Left ventricle myocardium inferior (tissue), 1 donor: ENCODE measurements at regions of chr4 and their contacts with region 1.

Region 1: DNA sequence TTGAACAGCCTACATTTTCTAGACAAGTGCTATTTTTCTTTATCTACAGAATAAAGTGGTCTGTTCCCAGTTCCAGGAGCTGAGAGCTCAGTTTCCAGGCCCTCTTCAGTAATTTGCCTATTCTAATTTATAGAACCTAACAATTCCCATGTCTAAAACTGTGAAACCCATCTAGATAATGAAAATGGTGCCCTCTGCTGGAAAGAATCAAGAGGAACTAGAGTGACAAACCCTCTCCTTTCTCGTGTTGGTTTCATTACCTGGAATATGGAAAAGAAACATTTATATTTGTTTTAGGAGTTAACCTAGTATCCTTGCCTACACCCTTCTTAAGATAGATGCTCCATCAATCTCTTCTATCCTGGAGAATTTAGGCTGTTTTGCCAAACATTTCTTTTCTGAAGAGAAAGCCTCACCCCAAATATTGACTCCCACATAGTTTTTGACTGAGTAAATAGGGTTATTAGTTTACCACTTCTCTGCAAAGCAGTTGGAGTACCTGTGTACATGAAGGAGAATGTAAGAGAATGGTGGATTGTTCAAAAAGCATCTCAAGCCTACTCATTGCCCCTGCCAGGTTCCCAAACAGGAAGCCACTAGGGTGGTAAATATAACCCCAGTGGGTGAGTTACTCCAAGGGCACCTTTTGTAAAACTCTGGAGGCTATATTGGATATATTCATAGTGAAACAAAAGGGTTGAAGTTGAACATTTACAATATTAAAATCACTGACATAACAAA is 121.6 kb downstream of the RASL11B start:
- DNase-seq: no peak
- H3K4me3 ChIP-seq: no peak overlapping the region
- H3K27ac ChIP-seq: peak overlapping the region; percentile 34
- H3K4me1 ChIP-seq: peaks cover 14% of the 10 kb centered on the region
- H3K27me3 ChIP-seq: no peaks in the 10 kb centered on the region
- CTCF ChIP-seq: peak; percentile 79

Region 2: DNA sequence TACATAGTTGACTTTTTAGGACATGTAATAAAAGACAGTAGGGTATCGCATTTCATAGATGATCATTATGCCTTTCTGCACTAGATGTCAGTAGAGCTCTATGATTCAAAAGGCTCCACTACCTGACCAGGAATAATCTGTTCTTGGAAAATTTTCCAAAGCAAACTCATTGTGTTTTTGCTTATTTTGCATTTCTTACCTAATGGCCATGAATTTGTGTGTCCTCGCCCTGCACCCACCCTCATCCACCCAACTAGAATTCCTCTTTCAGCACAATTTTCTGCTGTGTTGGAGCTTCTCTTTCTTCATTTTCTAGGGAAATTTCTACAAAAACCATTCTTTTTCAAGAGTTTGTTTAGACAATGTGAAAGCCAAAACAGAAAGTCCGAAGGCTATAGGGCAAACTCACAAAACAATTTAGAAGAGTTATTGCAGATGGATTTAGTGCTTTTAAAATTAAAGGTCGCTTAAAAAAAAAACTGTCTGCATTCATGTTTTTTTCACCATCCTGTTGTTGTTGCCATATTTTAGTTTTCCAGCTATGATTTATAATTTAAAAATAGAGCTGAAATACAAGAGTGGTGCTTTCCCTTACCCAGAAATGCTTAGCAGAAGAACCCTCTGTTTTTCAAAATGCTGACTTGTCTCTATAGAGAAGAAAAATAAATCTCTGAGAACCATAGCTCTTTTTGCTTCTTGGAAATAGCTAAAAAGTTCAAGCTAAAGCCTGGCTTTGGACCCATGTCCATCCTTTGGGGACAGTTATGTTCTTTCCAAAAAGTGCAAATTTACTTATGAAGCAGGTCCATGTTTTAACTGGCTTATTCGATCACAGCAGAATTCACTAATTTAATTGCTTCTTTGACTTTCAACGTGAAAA is 748.9 kb before region 1 on chr4:
- intact Hi-C with region 1: loop called (anchors 10 kb)
- DNase-seq: no peak
- H3K4me3 ChIP-seq: peak overlapping the region; percentile 28
- H3K27ac ChIP-seq: peak overlapping the region; percentile 40
- H3K4me1 ChIP-seq: no peaks in the 10 kb centered on the region
- H3K27me3 ChIP-seq: peaks cover 24% of the 10 kb centered on the region
- CTCF ChIP-seq: peak; percentile 71

Region 3: DNA sequence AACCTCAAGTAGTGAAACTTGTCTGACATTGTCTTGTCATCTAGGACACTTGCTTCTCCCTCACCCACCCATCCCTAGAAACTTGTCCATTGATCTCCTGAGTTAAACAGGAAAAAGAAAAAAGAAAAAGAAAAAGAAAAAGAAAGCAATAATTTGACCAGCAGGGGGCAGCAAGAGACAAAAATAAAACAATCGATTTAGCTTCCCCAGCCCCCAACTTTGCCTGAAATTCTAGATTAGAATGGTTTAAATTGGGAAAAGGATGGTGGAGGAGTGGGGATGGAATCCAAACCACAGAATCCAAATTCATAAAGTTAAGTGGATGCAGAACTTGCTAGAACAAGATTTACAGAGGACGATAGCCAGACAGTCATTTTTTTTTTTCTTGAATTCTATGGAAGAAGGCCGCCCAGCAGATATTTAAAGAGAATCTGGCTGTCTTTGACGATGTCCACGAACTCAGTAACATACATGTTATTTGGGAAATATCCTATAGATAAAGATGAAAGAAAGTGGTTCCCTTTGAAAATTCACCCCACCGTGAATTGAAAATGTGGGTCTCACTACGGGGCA is 607.5 kb before region 1 on chr4:
- intact Hi-C with region 1: loop called (anchors 5 kb)
- DNase-seq: no peak
- H3K4me3 ChIP-seq: no peak overlapping the region
- H3K27ac ChIP-seq: no peak overlapping the region
- H3K4me1 ChIP-seq: peaks cover 3% of the 10 kb centered on the region
- H3K27me3 ChIP-seq: no peaks in the 10 kb centered on the region
- CTCF ChIP-seq: peak; percentile 65

Region 4: DNA sequence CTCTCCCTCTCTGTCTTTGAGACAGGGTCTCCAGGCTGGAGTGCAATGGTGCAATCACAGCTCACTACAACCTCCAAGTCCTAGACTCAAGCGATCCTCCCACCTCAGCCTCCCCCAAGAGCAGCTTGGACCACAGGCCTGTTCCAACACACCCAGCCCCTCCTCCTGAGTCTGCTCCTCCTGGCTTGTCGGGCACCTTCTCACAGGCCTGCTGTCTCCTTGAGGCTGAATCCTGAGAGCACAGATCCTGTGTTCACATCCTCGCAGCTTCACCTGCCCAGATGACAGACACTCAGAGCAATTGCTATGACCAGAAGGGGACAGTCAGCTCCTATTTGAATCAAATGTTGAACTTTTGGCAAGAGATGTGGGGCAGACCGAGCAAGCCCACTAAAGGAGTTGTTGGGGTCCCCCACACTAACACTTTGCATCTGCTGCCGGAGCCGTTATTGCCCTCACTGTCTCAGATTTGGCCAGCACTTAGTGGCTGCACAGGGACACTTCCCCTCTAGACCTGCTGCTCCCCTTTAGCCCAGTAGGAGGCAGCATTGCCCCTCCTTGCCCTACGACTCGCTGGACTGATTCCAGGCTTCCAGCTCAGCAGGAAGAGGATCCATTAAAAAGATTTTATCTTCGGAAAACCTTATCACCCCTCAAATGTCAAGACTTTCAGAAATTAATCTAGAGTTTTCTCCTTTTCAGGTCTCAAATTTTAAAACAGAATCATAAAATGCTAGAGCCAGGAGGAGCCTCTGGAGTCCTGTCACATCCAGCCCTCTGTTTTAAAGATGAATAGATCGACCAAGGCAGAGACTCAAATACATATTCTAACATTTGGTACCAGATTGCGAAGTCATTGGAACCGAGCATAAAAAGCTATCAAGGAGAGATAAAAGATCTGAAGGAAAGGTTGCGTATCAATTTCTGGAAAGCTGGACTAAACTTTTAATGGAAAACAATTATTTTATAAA is 438.3 kb before region 1 on chr4:
- intact Hi-C with region 1: loop called (anchors 5 kb)
- DNase-seq: peak; percentile 73
- H3K4me3 ChIP-seq: no peak overlapping the region
- H3K27ac ChIP-seq: peak overlapping the region; percentile 88
- H3K4me1 ChIP-seq: peaks cover 35% of the 10 kb centered on the region
- H3K27me3 ChIP-seq: peaks cover 3% of the 10 kb centered on the region
- CTCF ChIP-seq: peak; percentile 98

Region 5: GRCh38 chr4:53019485-53020382 is 36.0 kb after region 1 on chr4:
- intact Hi-C with region 1: no loop called
- DNase-seq: no peak
- H3K4me3 ChIP-seq: no peak overlapping the region
- H3K27ac ChIP-seq: no peak overlapping the region
- H3K4me1 ChIP-seq: peaks cover 56% of the 10 kb centered on the region
- H3K27me3 ChIP-seq: no peaks in the 10 kb centered on the region
- CTCF ChIP-seq: no peak

Region 6: DNA sequence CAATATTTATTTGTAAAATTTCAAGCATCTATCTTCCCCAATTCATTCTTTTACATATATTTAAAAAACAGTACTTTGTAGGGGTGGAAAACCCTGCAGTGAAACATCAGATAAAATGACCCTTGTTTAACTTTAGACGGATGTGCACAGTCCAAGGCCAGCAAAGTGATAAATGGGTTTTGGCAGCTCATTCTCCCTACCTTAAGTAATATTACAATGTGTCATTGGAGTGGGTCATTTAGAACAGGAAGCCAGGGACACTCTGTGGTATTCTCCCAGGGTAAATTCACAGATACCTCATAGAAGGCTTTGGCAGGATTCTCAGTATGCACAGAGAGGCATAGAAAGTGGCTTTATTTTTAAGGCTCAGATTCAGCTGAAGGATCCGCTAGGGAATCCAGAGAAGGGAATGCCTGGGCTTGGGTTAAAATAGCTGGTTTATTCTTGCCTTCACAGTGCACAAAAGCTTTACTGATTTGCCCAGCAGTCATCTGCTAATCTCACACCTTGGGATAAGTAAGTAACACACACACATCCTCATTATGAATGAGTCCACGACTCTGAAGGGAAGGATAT is 85.1 kb after region 1 on chr4:
- intact Hi-C with region 1: no loop called
- DNase-seq: no peak
- H3K4me3 ChIP-seq: no peak overlapping the region
- H3K27ac ChIP-seq: no peak overlapping the region
- H3K4me1 ChIP-seq: no peaks in the 10 kb centered on the region
- H3K27me3 ChIP-seq: no peaks in the 10 kb centered on the region
- CTCF ChIP-seq: no peak